ENCODE measurements at regions of chr5 and their contacts with region 1.

Region 1: GRCh38 chr5:113713051-113713450 is 199.6 kb downstream of the YTHDC2 start:
- DNase-seq: no peak
- ATAC-seq: no peak

Region 2: DNA sequence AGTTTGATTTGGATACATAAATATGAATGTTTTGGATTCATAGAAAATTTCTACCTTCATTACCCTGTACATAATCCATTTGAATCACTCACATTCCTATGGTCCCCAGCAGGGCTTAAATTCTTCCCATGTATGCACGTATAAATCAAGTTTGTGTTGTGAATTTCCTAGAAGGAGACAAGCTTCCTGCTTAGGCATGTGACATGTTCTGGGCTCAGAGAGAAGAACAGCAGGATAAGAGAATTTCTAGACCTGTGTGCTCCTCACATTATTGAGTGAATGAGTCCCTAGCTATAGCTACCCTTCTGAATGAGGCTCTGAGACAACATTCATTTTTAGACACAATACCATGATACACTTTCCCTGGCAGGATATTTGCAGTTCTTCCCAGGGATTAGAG is 29.6 kb after region 1 on chr5:
- intact Hi-C with region 1: loop called (anchors 1 kb)
- DNase-seq: no peak
- ATAC-seq: no peak

Measured in sciatic nerve (tissue), 2 donors.